ENCODE measurements at regions of chr22 and their contacts with region 1.

Region 1: GRCh38 chr22:19523240-19524169 is 705 bp downstream of the CLDN5 start:
- DNase-seq: no peak
- H3K4me3 ChIP-seq: peak overlapping the region in 2 of 3 experiments; percentile 5 to 38
- H3K27ac ChIP-seq: no peak overlapping the region
- H3K4me1 ChIP-seq: peaks cover 2% of the 10 kb centered on the region
- H3K27me3 ChIP-seq: peaks cover 42% of the 10 kb centered on the region
- CTCF ChIP-seq: no peak

Region 2: GRCh38 chr22:19463496-19464469 is 59.7 kb before region 1 on chr22:
- dilution Hi-C with region 1: loop called (anchors 10 kb)
- DNase-seq: peak; percentile 25
- H3K4me3 ChIP-seq: no peak overlapping the region
- H3K27ac ChIP-seq: no peak overlapping the region
- H3K4me1 ChIP-seq: no peaks in the 10 kb centered on the region
- H3K27me3 ChIP-seq: no peaks in the 10 kb centered on the region
- CTCF ChIP-seq: no peak

Region 3: GRCh38 chr22:19576460-19577421 is 53.2 kb after region 1 on chr22:
- dilution Hi-C with region 1: no loop called
- DNase-seq: no peak
- H3K4me3 ChIP-seq: peak overlapping the region in 2 of 3 experiments; percentile 32 to 43
- H3K27ac ChIP-seq: peak overlapping the region; percentile 86
- H3K4me1 ChIP-seq: peaks cover 38% of the 10 kb centered on the region
- H3K27me3 ChIP-seq: no peaks in the 10 kb centered on the region
- CTCF ChIP-seq: no peak

Measured in keratinocyte (primary cell).